ENCODE measurements at regions of chr11 and their contacts with region 1.

Region 1: DNA sequence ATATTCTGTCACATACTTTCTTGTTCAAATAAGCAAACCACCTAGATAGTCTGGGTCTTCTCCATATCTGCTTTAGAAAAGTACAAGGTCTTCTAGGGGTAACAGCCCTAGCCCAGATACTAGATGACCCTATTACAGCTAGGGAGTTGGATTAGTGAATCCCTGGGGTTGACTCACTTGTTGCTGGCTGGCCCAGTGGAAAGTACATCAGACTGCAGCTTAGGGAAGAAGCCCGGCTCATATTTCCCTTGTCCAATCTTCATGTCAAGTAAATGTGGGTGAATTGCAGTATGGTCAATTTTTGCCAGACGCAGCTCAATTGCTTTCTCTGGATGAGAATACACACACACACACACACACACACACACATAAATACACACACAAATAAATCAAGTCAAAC is 79.1 kb upstream of the SCUBE2 start:
- DNase-seq: no peak
- H3K4me3 ChIP-seq: no peak overlapping the region
- H3K4me3 Mint-ChIP-seq: no peak overlapping the region
- H3K27ac Mint-ChIP-seq: no peak overlapping the region
- H3K4me1 ChIP-seq: no peaks in the 10 kb centered on the region
- H3K4me1 Mint-ChIP-seq: peaks cover 13% of the 10 kb centered on the region
- H3K27me3 ChIP-seq: no peaks in the 10 kb centered on the region
- H3K27me3 Mint-ChIP-seq: no peaks in the 10 kb centered on the region
- CTCF ChIP-seq: no peak

Region 2: GRCh38 chr11:9130297-9130696 is 40.2 kb before region 1 on chr11:
- CTCF ChIA-PET with region 1: no interaction called
- POLR2A ChIA-PET with region 1: no interaction called
- intact Hi-C with region 1: no loop called
- DNase-seq: no peak
- H3K4me3 ChIP-seq: no peak overlapping the region
- H3K4me3 Mint-ChIP-seq: no peak overlapping the region
- H3K27ac Mint-ChIP-seq: no peak overlapping the region
- H3K4me1 ChIP-seq: no peaks in the 10 kb centered on the region
- H3K4me1 Mint-ChIP-seq: peaks cover 13% of the 10 kb centered on the region
- H3K27me3 ChIP-seq: no peaks in the 10 kb centered on the region
- H3K27me3 Mint-ChIP-seq: no peaks in the 10 kb centered on the region
- CTCF ChIP-seq: no peak

Region 3: DNA sequence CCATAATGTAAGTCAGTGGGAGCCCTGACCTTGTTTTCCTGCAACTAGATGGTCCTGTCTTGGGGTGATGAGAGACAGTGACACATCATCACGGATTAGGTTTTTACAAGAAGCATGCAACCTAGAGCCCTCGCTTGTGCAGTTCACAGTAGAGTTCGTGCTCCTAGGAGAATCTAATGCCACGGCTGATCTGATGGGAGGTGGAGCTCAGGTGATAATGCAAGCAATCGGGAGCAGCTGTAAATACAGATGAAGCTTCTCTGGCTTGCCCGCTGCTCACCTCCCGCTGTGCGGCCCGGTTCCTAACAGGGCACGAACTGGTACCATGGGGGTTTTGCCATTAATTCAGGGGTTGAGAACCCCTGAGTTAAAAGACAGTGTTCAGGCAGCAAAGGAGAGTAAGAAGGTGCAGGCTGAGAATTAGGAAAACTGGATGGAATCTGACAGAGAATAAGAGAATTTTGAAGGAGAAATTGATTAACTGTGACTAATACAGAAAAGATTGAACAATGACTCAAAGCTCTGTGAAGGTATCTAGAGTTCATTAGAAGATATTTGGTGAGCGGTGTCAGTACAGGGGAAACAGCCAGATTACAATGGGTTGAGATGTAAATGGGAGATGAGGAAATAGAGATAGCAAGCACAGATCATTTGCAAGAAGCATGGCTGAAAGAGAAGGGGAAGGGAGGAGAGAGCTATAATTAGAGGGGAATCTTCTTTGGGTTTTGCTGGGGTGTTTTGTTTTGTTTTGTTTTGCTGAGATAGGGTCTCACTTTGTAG is 424.0 kb after region 1 on chr11:
- CTCF ChIA-PET with region 1: no interaction called
- POLR2A ChIA-PET with region 1: interaction called, 10 read pairs
- intact Hi-C with region 1: no loop called
- DNase-seq: no peak
- H3K4me3 ChIP-seq: no peak overlapping the region
- H3K4me3 Mint-ChIP-seq: no peak overlapping the region
- H3K27ac Mint-ChIP-seq: no peak overlapping the region
- H3K4me1 ChIP-seq: no peaks in the 10 kb centered on the region
- H3K4me1 Mint-ChIP-seq: peaks cover 8% of the 10 kb centered on the region
- H3K27me3 ChIP-seq: no peaks in the 10 kb centered on the region
- H3K27me3 Mint-ChIP-seq: no peaks in the 10 kb centered on the region
- CTCF ChIP-seq: no peak

Measured in Caco-2 (cell line).